Heart right ventricle (tissue), 16 donors: ENCODE measurements at regions of chr11 and their contacts with region 1.

Region 1: DNA sequence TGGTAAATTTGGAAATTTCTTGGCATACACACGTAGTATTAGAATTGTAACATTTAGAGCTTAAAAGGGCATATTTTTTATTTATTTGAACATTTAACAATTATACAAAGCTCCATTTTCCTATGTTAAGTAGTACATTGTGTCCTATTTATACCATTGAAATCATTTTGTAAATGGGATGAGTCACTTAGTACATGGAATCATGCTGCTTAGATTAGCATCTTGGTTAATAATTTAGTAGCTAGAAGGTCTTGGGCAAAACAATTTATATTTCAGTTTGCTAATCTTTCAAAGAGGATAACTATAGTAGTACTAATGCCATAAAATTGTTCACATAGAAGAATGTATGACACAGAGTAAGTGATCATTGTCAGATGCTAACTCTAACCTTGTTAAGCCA is 450.1 kb upstream of the LUZP2 start:
- DNase-seq: no peak
- ATAC-seq: no peak
- H3K4me3 ChIP-seq: no peak overlapping the region
- H3K27ac ChIP-seq: no peak overlapping the region
- H3K4me1 ChIP-seq: no peaks in the 10 kb centered on the region
- H3K27me3 ChIP-seq: no peaks in the 10 kb centered on the region
- CTCF ChIP-seq: no peak

Region 2: GRCh38 chr11:23974051-23974450 is 72.7 kb before region 1 on chr11:
- intact Hi-C with region 1: no loop called
- DNase-seq: no peak
- ATAC-seq: no peak
- H3K4me3 ChIP-seq: no peak overlapping the region
- H3K27ac ChIP-seq: no peak overlapping the region
- H3K4me1 ChIP-seq: no peaks in the 10 kb centered on the region
- H3K27me3 ChIP-seq: no peaks in the 10 kb centered on the region
- CTCF ChIP-seq: no peak

Region 3: GRCh38 chr11:23988381-23989006 is 58.2 kb before region 1 on chr11:
- intact Hi-C with region 1: loop called in 1 of 10 experiments (anchors 10 kb)
- DNase-seq: no peak
- ATAC-seq: no peak
- H3K4me3 ChIP-seq: no peak overlapping the region
- H3K27ac ChIP-seq: no peak overlapping the region
- H3K4me1 ChIP-seq: peaks cover 0 to 5% (median 0%) of the 10 kb centered on the region in 9 donors
- H3K27me3 ChIP-seq: no peaks in the 10 kb centered on the region
- CTCF ChIP-seq: no peak